Mammary epithelial cell (primary cell): ENCODE measurements at regions of chr10 and their contacts with region 1.

Region 1: DNA sequence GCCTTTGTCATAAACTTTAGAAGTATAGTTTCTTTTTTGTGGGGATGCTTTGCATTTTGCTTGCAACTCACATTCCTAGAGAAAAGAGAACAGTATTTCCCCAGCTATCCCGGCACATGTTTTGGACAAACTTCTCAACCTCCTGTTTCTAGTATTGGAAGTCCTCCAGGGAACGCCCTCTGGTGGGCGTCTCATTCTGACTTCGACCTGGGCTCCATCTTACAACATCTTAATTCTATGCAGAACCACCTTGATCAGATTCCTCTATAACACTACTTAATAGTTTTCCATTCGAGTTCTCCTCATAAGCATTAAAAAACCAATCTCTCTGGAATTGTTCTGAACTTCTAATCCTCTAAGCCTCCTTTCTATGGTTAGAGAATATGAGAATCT is 139.5 kb upstream of the FZD8 start:
- DNase-seq: no peak
- H3K4me3 ChIP-seq: no peak overlapping the region
- H3K27ac ChIP-seq: no peak overlapping the region
- H3K4me1 ChIP-seq: peaks cover 27% of the 10 kb centered on the region
- H3K27me3 ChIP-seq: no peaks in the 10 kb centered on the region
- CTCF ChIP-seq: peak in 1 of 2 donors; percentile 1

Region 2: GRCh38 chr10:35643151-35644044 is 138.2 kb before region 1 on chr10:
- CTCF ChIA-PET with region 1: no interaction called
- dilution Hi-C with region 1: no loop called
- in situ Hi-C with region 1: no loop called
- intact Hi-C with region 1: no loop called
- DNase-seq: no peak
- H3K4me3 ChIP-seq: peak overlapping the region; percentile 55 to 72 (median 63)
- H3K27ac ChIP-seq: no peak overlapping the region
- H3K4me1 ChIP-seq: peaks cover 22% of the 10 kb centered on the region
- H3K27me3 ChIP-seq: no peaks in the 10 kb centered on the region
- CTCF ChIP-seq: no peak

Region 3: GRCh38 chr10:35668865-35669650 is 112.6 kb before region 1 on chr10:
- CTCF ChIA-PET with region 1: no interaction called
- dilution Hi-C with region 1: no loop called
- in situ Hi-C with region 1: no loop called
- intact Hi-C with region 1: no loop called
- DNase-seq: no peak
- H3K4me3 ChIP-seq: no peak overlapping the region
- H3K27ac ChIP-seq: no peak overlapping the region
- H3K4me1 ChIP-seq: no peaks in the 10 kb centered on the region
- H3K27me3 ChIP-seq: no peaks in the 10 kb centered on the region
- CTCF ChIP-seq: no peak

Region 4: DNA sequence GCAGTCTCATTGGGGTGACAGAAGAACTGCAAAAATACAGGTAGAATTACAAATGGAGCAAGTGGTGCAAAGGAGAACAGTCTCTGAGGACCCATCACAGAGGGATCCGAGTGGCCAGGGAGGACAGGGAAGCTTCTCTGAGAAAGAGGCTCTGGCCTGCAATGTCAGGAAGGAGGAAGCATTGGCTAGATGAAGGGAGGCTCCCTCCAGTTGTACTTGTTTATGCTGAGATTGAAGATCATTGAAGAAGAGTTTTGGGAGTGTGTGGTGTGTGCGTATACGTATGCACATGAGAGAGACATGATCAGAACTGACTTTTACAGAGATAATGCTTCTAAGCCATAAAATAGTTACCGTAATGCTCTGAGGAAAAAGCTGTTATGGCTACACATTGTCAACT is 135.2 kb after region 1 on chr10:
- CTCF ChIA-PET with region 1: no interaction called
- dilution Hi-C with region 1: no loop called
- in situ Hi-C with region 1: no loop called
- intact Hi-C with region 1: loop called (anchors 2 kb)
- DNase-seq: no peak
- H3K4me3 ChIP-seq: no peak overlapping the region
- H3K27ac ChIP-seq: no peak overlapping the region
- H3K4me1 ChIP-seq: peaks cover 19% of the 10 kb centered on the region
- H3K27me3 ChIP-seq: no peaks in the 10 kb centered on the region
- CTCF ChIP-seq: peak; percentile 7 to 52

Region 5: DNA sequence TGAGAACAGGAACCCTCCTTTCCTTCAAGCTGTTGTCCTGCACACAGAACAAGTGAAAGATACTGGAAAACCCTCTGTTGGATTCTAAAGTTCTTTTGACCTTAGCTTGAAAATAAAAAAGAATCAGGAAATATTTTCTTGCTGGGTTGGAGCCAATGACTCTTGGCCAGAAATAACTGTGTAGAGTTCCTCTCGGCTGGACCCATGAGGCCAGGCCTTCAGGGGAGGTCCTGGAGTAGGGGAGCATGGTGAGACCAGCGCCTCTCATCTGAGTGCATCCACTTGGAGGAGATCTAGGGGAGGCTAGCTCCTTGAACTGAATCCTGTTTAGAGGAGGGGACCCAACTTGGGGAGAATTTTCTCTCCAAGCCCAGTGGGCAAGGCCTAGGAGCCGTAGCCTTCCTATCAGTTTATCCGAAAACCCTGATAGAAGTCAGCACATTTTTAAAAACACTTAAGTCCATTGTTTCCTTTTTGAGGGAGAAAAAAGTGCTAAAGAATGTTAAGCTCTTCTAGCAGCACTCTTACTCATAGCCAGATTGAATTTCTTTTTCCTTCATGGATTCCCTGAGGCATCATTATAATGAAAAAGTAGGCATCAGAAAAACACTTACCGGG is 708.1 kb after region 1 on chr10:
- CTCF ChIA-PET with region 1: no interaction called
- dilution Hi-C with region 1: no loop called
- in situ Hi-C with region 1: no loop called
- intact Hi-C with region 1: loop called (anchors 10 kb)
- DNase-seq: peak; percentile 48
- H3K4me3 ChIP-seq: no peak overlapping the region
- H3K27ac ChIP-seq: peak overlapping the region; percentile 58
- H3K4me1 ChIP-seq: peaks cover 33% of the 10 kb centered on the region
- H3K27me3 ChIP-seq: no peaks in the 10 kb centered on the region
- CTCF ChIP-seq: no peak